HepG2 (cell line): ENCODE measurements at regions of chr18 and their contacts with region 1.

Region 1: GRCh38 chr18:58235001-58235436 is 191.0 kb downstream of the NEDD4L start:
- DNase-seq: peak; percentile 56
- ATAC-seq: peak; percentile 96
- H3K4me3 ChIP-seq: peak overlapping the region in 1 of 3 experiments; percentile 7; a peak in 1 of 6 replicates
- H3K27ac ChIP-seq: peak overlapping the region; percentile 66
- H3K4me1 ChIP-seq: peaks cover 56% of the 10 kb centered on the region
- H3K27me3 ChIP-seq: no peaks in the 10 kb centered on the region
- CTCF ChIP-seq: peak; percentile 21; the same call in 1 of the 2 replicates
- EP300 ChIP-seq: peak in 1 of 2 experiments; percentile 26; a peak in 1 of 4 replicates
- POLR2A ChIP-seq: no peak
- RAD21 ChIP-seq: no peak

Region 2: DNA sequence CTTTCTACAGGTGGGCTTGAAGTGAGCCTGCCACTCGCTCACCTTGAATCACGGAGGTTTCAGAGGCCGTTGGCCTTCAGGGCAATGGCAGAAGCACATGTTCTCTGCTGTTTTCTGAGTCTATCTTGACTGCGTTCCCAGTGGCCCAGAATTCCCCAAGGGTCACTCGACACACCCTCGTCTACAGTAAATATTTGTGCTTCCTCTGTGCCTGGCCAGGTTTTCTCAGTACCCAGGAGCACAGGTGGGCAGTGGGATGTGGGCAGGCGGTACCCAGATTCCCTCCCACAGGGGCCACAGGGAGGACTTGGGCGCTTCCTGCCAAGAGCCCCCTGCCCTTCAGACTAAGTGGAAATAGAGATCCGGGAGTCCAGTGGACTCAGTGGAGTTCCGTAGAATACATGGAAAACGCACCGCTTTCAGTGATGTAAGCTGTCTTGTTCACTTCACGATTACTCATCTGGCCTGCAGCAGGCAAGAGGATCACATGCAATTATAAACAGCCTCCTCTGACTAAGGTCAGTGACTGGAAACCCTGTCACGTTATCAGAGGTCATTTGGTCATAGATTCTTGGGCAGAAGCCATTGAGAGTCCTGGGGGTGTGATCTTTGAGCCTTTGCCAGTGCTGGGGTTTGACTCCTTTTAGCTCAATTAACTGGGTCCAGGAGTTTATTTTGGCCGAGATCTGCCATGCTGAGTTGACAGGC is 11.1 kb before region 1 on chr18:
- CTCF ChIA-PET with region 1: no interaction called
- POLR2A ChIA-PET with region 1: interaction called, 10 read pairs
- in situ Hi-C with region 1: no loop called
- intact Hi-C with region 1: no loop called
- DNase-seq: peak; percentile 81
- ATAC-seq: peak; percentile 81
- H3K4me3 ChIP-seq: peak overlapping the region; percentile 56 to 96 (median 75)
- H3K27ac ChIP-seq: peak overlapping the region; percentile 67
- H3K4me1 ChIP-seq: peaks cover 59% of the 10 kb centered on the region
- H3K27me3 ChIP-seq: no peaks in the 10 kb centered on the region
- CTCF ChIP-seq: no peak
- EP300 ChIP-seq: no peak
- POLR2A ChIP-seq: peak in 1 of 2 experiments; percentile 27; a peak in 1 of 4 replicates
- RAD21 ChIP-seq: no peak